ENCODE measurements at regions of chr16 and their contacts with region 1.

Region 1: DNA sequence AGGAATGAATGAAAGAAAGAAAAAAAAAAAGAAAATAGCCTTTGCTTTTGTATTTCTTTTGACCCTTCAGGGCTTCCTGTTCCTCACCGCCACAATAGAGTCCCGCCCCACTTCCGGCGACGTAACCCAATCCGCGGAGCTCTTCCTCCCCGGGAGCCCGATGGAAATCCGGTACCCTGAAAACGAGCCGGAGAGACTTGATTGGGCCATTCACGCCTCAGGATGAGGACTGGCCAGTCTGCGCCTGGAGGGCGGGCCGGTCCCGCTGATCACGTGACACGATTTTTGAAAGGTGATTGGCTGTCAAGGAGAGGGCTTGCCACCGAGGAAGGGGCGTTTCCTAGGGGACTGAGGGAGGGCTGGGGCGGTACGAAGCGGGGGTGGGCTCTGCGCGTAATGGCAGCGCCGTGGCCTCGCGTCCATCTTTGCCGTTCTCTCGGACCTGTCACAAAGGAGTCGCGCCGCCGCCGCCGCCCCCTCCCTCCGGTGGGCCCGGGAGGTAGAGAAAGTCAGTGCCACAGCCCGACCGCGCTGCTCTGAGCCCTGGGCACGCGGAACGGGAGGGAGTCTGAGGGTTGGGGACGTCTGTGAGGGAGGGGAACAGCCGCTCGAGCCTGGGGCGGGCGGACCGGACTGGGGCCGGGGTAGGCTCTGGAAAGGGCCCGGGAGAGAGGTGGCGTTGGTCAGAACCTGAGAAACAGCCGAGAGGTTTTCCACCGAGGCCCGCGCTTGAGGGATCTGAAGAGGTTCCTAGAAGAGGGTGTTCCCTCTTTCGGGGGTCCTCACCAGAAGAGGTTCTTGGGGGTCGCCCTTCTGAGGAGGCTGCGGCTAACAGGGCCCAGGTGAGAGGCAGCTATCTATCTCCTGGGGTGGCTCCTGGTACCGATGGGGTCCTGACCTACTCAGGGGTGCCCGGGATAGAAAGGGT is at the starts of genes PSME3IP1 and RSPRY1:
- DNase-seq: peak; percentile 95 to 100 (median 98)
- ATAC-seq: peak; percentile 89
- H3K4me3 ChIP-seq: peak within 1 kb of the TSS; percentile 96
- H3K4me3 Mint-ChIP-seq: peak within 1 kb of the TSS; percentile 94
- H3K27ac ChIP-seq: peak within 1 kb of the TSS; percentile 92
- H3K27ac Mint-ChIP-seq: peak within 1 kb of the TSS; percentile 90
- H3K4me1 ChIP-seq: peaks cover 25% of the 10 kb centered on the region
- H3K4me1 Mint-ChIP-seq: peaks cover 50% of the 10 kb centered on the region
- H3K27me3 ChIP-seq: no peaks in the 10 kb centered on the region
- H3K27me3 Mint-ChIP-seq: no peaks in the 10 kb centered on the region
- CTCF ChIP-seq: no peak
- total RNA-seq, gene PSME3IP1: 77.1 to 77.9 TPM
- total RNA-seq, gene RSPRY1: 19.9 to 21.3 TPM

Region 2: DNA sequence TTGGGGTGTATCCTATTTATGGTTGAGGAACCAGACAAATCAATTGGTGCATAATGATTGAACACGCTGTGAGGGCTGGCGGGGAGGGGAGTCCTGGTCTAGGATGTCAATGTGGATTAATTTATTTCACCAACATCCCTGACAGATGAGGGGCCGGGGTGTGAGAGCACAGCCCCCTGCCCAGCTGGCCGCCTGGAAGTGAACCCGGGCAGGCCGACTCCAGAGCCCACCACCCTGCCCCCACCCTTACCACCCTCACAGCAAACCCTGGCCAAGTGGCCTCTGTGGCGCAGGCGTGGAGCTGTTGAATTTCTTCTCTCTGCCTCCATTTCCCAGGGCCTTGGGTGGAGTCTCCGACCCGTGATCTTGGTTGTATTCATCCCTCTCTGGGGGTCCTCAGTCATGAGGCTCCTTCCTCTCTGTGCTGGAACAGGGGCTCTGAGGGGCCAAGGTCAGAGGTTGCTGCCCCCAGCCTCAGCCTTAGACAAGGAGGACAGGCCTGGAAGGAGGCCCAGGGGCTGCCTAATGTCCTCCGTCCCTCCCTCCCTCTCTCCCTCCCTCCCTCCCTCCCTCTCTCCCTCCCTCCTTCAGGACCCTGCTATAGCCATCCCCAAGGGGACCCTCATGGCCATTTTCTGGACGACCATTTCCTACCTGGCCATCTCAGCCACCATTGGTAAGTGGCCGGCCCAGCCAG is 308.6 kb before region 1 on chr16:
- CTCF ChIA-PET with region 1: no interaction called
- POLR2A ChIA-PET with region 1: no interaction called
- intact Hi-C with region 1: no loop called
- DNase-seq: no peak
- ATAC-seq: no peak
- H3K4me3 ChIP-seq: no peak overlapping the region
- H3K4me3 Mint-ChIP-seq: no peak overlapping the region
- H3K27ac ChIP-seq: no peak overlapping the region
- H3K27ac Mint-ChIP-seq: no peak overlapping the region
- H3K4me1 ChIP-seq: no peaks in the 10 kb centered on the region
- H3K4me1 Mint-ChIP-seq: no peaks in the 10 kb centered on the region
- H3K27me3 ChIP-seq: no peaks in the 10 kb centered on the region
- H3K27me3 Mint-ChIP-seq: no peaks in the 10 kb centered on the region
- CTCF ChIP-seq: no peak

Region 3: DNA sequence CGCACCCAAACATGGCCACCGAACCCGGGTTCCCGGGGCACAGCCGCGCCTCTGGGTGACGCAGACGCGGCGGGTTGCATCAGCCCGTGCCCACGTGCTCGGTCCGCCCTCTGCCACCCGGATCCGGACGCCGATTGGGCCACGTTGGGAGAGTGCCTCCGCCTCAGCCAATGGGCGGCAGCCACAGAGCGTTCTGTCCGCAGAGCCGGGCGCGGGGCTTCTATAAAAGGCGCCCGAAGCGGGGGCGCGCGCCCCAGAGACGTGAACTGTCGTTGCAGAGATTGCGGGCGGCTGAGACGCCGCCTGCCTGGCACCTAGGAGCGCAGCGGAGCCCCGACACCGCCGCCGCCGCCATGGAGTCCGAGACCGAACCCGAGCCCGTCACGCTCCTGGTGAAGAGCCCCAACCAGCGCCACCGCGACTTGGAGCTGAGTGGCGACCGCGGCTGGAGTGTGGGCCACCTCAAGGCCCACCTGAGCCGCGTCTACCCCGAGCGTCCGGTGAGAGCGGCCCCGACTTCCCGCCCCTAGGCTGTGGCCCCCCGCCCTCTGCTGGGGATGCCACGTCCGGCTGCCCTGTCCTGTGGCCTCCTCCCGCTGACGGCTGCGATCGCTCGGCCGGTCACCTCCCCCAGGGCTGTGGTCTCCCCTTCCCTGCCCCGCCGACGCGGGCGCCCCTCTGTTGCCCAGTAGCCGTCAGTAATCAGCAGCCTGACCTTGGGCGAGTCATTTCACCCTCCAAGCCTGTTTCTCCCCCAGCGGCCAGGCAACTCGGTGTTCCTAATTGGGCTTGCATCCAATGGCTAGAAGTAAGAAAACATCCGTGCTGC is 254.1 kb before region 1 on chr16 and contains the start of gene HERPUD1:
- CTCF ChIA-PET with region 1: no interaction called
- POLR2A ChIA-PET with region 1: interaction called, 19 read pairs
- intact Hi-C with region 1: loop called in 1 of 2 experiments (anchors 10 kb)
- DNase-seq: peak; percentile 98 to 100 (median 99)
- ATAC-seq: peak; percentile 96
- H3K4me3 ChIP-seq: peak within 1 kb of the TSS; percentile 99
- H3K4me3 Mint-ChIP-seq: peak within 1 kb of the TSS; percentile 99
- H3K27ac ChIP-seq: peak within 1 kb of the TSS; percentile 81 to 93
- H3K27ac Mint-ChIP-seq: peak within 1 kb of the TSS; percentile 96
- H3K4me1 ChIP-seq: peaks cover 28% of the 10 kb centered on the region
- H3K4me1 Mint-ChIP-seq: peaks cover 39% of the 10 kb centered on the region
- H3K27me3 ChIP-seq: no peaks in the 10 kb centered on the region
- H3K27me3 Mint-ChIP-seq: no peaks in the 10 kb centered on the region
- CTCF ChIP-seq: peak; percentile 27
- total RNA-seq, gene HERPUD1: 217 to 227 TPM

Region 4: DNA sequence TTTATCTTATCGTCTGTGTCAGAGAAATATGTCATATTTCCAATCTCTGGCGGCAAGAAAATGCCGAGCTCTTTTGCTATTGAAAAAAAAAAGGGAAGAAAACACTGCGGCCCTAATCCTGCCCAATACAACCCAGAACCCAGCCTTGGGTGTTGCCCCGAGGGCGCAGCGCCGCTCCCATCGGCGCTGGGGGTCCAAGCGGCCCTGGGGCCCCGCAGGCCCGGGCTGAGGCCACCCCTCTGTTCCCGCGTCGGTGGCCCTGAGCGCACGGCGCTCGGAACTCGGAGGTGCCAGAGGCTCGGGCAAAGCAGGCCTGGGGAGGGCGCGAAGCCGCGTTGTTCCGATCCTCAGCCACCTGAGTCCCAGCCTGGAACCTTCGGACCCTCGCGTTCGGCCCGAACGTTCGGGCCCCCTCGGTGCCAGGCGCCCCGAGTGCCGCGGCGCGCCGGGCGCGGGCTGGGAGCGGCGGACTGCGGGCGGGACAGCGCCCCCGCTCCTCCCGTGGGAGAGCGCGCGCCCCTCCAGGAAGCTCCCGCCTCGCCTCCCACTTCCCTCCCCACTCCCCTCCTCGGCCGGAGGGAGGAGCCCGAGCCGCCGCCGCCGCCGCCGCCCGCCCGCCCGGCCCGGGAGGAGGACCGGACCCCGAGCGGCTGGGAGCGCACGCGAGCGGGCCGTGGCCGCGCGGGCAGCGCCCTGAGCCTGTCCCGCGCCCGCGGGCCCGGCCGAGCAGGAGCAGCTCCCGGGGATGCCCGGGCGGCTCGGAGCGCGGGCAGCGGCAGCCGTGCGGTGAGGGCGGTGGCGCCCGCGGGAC is 94.0 kb before region 1 on chr16 and contains the start of gene CPNE2:
- CTCF ChIA-PET with region 1: interaction called, 3 read pairs
- POLR2A ChIA-PET with region 1: interaction called, 15 read pairs
- intact Hi-C with region 1: no loop called
- DNase-seq: peak in 7 of 14 experiments; percentile 3 to 63 (median 34)
- ATAC-seq: peak; percentile 48
- H3K4me3 ChIP-seq: peak within 1 kb of the TSS; percentile 34
- H3K4me3 Mint-ChIP-seq: peak within 1 kb of the TSS; percentile 87
- H3K27ac ChIP-seq: no peak within 1 kb of the TSS
- H3K27ac Mint-ChIP-seq: no peak within 1 kb of the TSS
- H3K4me1 ChIP-seq: peaks cover 21% of the 10 kb centered on the region
- H3K4me1 Mint-ChIP-seq: peaks cover 11% of the 10 kb centered on the region
- H3K27me3 ChIP-seq: no peaks in the 10 kb centered on the region
- H3K27me3 Mint-ChIP-seq: no peaks in the 10 kb centered on the region
- CTCF ChIP-seq: no peak
- total RNA-seq, gene CPNE2: 2.2 to 3.5 TPM

Region 5: DNA sequence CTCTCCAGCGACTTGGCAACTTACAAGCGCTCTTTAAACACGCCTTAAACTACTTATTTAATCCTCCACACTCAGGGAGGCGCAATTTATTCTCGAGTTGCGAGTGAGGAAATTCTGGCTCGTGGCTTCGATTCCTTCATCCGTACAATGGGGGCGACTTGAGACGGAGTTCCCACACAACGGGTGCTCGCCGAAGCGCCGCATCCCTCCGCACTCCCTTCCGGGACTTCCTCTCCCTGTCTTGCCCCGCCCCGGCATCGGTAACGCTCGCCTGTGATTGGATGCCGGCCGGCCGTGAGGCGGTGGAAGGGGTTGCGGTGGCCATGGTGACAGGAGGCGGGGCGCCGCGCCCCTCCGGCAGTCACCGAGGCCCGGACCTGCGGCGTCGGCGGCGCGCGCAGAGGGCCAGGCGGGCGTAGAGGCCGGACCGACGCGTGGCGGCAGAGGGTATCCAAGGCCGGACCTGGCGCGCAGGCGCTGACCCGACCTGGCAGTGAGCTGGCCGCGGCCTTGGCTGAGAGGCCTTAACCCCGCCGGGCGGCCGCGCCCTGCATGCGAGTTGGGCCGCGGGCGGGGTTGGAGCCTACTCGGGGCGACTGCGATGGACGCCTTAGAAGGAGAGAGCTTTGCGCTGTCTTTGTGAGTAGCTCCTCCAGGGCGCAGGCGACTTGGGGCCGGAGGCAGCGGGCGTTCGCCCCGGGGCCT is 58.7 kb after region 1 on chr16 and contains the start of gene ARL2BP:
- CTCF ChIA-PET with region 1: no interaction called
- POLR2A ChIA-PET with region 1: interaction called, 4 read pairs
- intact Hi-C with region 1: loop called (anchors 1 to 5 kb)
- DNase-seq: peak; percentile 93 to 98 (median 97)
- ATAC-seq: peak; percentile 94
- H3K4me3 ChIP-seq: peak within 1 kb of the TSS; percentile 64
- H3K4me3 Mint-ChIP-seq: peak within 1 kb of the TSS; percentile 89
- H3K27ac ChIP-seq: peak within 1 kb of the TSS; percentile 63 to 68
- H3K27ac Mint-ChIP-seq: peak within 1 kb of the TSS; percentile 86
- H3K4me1 ChIP-seq: peaks cover 19% of the 10 kb centered on the region
- H3K4me1 Mint-ChIP-seq: peaks cover 21% of the 10 kb centered on the region
- H3K27me3 ChIP-seq: no peaks in the 10 kb centered on the region
- H3K27me3 Mint-ChIP-seq: no peaks in the 10 kb centered on the region
- CTCF ChIP-seq: peak; percentile 53
- total RNA-seq, gene ARL2BP: 32.4 to 35.6 TPM

Region 6: DNA sequence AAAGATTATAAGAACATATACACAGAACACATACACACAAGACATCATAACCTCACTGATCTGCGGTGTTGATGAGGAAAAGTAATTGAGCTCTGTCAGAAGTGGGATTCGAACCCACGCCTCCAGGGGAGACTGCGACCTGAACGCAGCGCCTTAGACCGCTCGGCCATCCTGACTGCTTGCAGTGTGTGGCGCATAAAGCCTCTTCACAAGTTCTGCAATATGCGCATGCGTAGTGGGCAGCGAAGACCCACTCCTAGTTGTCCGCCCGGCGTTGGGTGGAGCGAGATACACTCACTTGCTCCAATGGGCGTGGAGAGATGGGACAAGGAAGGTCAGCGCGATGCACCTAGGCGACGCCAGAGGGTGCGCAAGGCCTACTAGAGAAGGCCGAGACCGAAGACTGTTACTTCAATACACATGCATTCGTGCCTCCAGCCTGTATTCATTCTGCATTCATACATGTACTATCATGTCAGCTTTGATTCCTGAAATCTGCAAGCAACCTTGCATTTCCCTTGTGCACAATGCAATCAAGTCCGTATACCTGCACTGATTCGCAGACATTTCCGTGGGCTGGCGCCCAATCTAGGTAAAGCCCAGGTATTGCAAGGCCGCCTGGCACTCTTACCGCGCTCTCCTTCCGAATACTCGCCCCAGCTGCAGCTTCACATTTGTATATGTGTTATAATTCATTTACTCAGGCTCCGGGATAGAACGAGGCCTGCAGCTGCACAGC is 114.3 kb after region 1 on chr16:
- CTCF ChIA-PET with region 1: no interaction called
- POLR2A ChIA-PET with region 1: interaction called, 11 read pairs
- intact Hi-C with region 1: loop called (anchors 2 to 5 kb)
- DNase-seq: peak; percentile 97 to 100 (median 99)
- ATAC-seq: peak; percentile 91
- H3K4me3 ChIP-seq: peak overlapping the region; percentile 58
- H3K4me3 Mint-ChIP-seq: no peak overlapping the region
- H3K27ac ChIP-seq: peak overlapping the region; percentile 50 to 79
- H3K27ac Mint-ChIP-seq: no peak overlapping the region
- H3K4me1 ChIP-seq: peaks cover 54% of the 10 kb centered on the region
- H3K4me1 Mint-ChIP-seq: peaks cover 16% of the 10 kb centered on the region
- H3K27me3 ChIP-seq: no peaks in the 10 kb centered on the region
- H3K27me3 Mint-ChIP-seq: no peaks in the 10 kb centered on the region
- CTCF ChIP-seq: peak; percentile 88

Region 7: DNA sequence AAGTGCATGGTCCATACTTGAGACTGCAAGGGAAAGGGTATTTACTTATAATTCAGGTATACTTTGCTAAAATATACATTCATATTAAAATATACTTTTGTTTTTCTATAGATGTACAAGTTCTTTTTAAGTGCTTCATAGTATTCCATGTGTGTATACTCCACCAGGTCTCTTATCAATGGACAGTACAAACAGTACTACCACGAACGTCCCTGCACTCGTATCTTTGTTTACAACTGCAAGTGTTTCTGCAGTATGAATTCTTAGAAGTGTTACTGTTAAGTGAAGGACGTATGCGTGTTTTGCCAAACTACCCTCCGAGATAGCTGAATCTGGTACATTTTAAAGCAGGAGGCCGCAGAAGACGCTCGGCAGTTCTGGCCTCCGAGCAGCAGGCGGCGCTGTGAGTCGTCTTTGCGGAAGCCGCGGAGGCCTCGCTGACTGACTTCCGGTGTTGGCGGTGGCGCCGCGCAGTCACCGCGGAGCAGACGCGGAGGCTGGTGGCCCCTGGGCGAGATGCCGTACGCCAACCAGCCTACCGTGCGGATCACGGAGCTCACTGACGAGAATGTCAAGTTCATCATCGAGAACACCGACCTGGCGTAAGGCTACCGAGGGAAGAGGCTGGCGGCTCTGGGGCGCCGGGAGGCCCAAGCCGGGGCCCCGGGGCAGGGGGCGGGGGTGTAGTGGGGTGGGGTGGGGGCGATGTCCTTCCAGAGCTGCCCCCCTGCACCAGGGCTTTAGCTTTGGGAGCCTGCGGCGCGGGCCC is 276.2 kb after region 1 on chr16 and contains the start of gene POLR2C:
- CTCF ChIA-PET with region 1: no interaction called
- POLR2A ChIA-PET with region 1: interaction called, 6 read pairs
- intact Hi-C with region 1: loop called in 1 of 2 experiments (anchors 5 kb)
- DNase-seq: peak; percentile 86 to 96 (median 92)
- ATAC-seq: peak; percentile 96
- H3K4me3 ChIP-seq: peak within 1 kb of the TSS; percentile 79
- H3K4me3 Mint-ChIP-seq: peak within 1 kb of the TSS; percentile 100
- H3K27ac ChIP-seq: peak within 1 kb of the TSS; percentile 33 to 52
- H3K27ac Mint-ChIP-seq: peak within 1 kb of the TSS; percentile 92
- H3K4me1 ChIP-seq: peaks cover 32% of the 10 kb centered on the region
- H3K4me1 Mint-ChIP-seq: peaks cover 43% of the 10 kb centered on the region
- H3K27me3 ChIP-seq: no peaks in the 10 kb centered on the region
- H3K27me3 Mint-ChIP-seq: no peaks in the 10 kb centered on the region
- CTCF ChIP-seq: peak; percentile 99
- total RNA-seq, gene POLR2C: 124 to 125 TPM

Region 8: DNA sequence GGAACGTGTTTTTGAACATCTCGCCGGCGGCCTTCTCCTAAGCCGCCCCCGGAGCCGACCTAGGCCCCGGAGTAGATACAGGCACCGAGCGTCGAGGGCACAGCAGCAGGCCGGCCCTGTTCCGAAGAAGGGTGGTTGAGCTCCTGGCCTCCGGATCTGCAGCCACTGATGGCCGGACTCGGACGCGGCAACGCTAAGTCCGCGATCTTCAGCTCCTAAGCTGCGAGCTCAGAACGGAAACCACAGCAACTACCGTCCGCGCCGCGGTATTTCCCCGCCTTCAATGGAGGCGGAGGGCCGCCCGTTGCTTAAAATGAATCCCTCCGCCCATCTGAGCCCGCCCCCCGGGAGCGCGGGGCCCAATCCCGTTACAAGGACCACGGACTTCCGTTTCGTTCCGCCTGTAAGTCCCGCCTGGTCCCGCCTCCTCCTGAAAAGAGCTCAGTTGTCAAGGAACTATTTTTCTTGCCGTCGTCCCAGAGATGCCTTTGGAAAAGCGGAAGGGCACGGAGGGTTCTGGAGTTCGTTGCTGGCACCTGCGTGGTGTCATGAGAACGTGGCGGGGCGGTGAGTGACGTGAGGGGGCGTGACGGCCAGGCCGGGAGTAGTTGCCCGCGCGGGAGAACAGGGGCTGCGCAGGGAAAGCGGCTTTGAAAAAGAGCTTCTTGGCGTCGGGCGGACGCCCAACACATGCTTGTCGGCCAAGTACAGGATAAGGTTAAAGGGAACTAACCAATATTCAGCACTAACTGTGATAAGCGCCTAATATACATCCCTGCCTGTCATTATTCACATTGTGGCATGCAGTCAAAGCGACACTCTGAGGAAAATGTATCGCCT is 943.1 kb after region 1 on chr16 and contains the start of gene CFAP20:
- CTCF ChIA-PET with region 1: no interaction called
- POLR2A ChIA-PET with region 1: no interaction called
- intact Hi-C with region 1: loop called in 1 of 2 experiments (anchors 5 kb)
- DNase-seq: peak; percentile 92 to 98 (median 96)
- ATAC-seq: peak; percentile 84
- H3K4me3 ChIP-seq: peak within 1 kb of the TSS; percentile 99
- H3K4me3 Mint-ChIP-seq: peak within 1 kb of the TSS; percentile 91
- H3K27ac ChIP-seq: peak within 1 kb of the TSS; percentile 84 to 88
- H3K27ac Mint-ChIP-seq: peak within 1 kb of the TSS; percentile 88
- H3K4me1 ChIP-seq: peaks cover 40% of the 10 kb centered on the region
- H3K4me1 Mint-ChIP-seq: peaks cover 47% of the 10 kb centered on the region
- H3K27me3 ChIP-seq: no peaks in the 10 kb centered on the region
- H3K27me3 Mint-ChIP-seq: no peaks in the 10 kb centered on the region
- CTCF ChIP-seq: no peak
- total RNA-seq, gene CFAP20: 250 to 261 TPM

Measured in CD4-positive, alpha-beta T cell (primary cell).